ENCODE measurements at regions of chr11 and their contacts with region 1.

Region 1: DNA sequence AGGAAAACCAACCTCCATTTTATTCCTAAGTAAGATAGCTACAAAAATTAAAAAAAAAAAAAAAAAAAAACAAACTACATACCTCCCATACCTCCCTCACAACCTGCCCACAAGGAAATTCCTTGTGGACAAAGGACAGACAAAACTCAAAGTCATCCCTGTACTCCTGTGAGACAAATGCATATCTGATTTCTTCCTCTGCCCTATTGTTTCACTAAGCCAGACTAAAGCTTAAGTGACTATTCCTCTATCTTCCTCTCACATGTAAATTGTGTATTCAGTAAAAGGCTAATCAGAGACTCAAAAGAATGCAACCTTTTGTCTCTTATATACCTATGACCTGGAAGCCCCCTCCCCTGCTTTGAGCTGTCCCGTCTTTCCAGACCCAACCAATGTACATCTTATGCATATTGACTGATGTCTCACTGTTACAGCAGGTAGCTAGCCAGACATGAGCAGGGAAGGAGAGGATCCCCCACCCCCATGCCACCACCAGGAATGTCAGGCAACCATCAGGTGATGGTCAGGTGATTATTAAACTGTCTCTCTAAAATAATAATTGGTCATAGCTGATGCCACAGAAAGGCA is 289.4 kb downstream of the SBF2 start:
- DNase-seq: peak in 1 of 2 experiments; percentile 6
- H3K4me3 ChIP-seq: no peak overlapping the region
- H3K27ac ChIP-seq: no peak overlapping the region
- H3K4me1 ChIP-seq: no peaks in the 10 kb centered on the region
- H3K27me3 ChIP-seq: no peaks in the 10 kb centered on the region
- CTCF ChIP-seq: no peak

Region 2: DNA sequence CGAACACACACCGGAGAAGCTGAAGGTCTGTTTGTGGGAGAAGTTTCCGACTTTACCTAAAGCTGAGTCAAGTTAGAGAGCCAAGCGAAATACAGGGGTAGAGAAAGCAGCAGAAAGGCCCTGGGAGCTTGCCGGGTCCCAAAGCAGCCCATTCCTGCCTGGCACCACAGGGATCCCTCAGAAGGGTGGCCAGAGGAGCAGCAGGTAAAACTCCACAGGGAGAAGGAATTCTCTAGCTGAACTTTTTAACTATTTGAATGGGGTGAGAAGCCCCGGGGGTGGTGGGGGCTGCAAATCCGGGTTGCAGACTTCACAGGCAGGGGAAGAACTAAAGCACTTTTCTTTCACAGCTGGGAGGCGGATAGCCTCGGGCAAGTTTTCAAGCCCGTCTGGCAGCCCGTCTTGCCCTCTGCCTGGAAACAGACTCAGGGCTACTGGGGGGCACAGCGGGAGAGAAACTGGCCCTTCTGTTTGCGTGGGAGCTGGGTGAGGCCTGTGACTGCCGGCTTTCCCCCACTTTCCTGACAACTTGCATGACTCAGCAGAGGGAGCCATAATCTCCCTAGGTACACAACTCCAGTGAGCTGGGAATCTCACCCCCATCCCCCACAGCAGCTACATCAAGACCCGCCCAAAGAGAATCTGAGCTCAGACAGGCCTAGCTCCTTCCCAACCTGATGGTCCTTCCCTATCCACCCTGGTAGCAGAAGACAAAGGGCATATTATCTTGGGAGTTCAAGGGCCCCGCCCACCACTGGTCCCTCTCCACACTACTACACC is 21.6 kb before region 1 on chr11:
- CTCF ChIA-PET with region 1: no interaction called
- POLR2A ChIA-PET with region 1: interaction called, 15 read pairs
- intact Hi-C with region 1: no loop called
- DNase-seq: peak in 1 of 2 experiments; percentile 9
- H3K4me3 ChIP-seq: no peak overlapping the region
- H3K27ac ChIP-seq: no peak overlapping the region
- H3K4me1 ChIP-seq: no peaks in the 10 kb centered on the region
- H3K27me3 ChIP-seq: no peaks in the 10 kb centered on the region
- CTCF ChIP-seq: no peak